ENCODE measurements at regions of chr1 and their contacts with region 1.

Region 1: DNA sequence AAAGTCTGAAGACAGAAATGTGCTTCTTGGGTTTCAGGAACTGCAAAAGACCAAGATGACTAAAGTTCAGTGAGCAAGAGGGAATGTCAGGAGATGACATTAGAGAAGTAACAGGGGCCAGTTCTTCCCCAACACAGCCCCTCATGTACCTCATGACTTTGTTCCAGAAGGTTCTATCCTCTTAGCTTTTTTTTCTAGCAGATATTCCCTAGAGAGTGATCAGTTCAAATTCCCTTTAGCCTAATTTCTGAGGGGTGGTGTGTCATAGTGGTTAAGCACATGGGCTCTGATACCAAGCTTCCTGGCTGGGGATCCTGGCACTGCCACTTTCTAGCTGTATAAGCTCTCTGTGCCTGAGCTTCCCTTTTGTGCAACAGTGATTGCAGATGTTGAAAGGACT is 108.0 kb downstream of the LBR start:
- DNase-seq: no peak
- ATAC-seq: peak; percentile 32
- H3K4me3 ChIP-seq: no peak overlapping the region
- H3K27ac ChIP-seq: no peak overlapping the region
- H3K4me1 ChIP-seq: peaks cover 0 to 2% of the 10 kb centered on the region in 2 donors
- H3K27me3 ChIP-seq: no peaks in the 10 kb centered on the region
- CTCF ChIP-seq: no peak

Region 2: DNA sequence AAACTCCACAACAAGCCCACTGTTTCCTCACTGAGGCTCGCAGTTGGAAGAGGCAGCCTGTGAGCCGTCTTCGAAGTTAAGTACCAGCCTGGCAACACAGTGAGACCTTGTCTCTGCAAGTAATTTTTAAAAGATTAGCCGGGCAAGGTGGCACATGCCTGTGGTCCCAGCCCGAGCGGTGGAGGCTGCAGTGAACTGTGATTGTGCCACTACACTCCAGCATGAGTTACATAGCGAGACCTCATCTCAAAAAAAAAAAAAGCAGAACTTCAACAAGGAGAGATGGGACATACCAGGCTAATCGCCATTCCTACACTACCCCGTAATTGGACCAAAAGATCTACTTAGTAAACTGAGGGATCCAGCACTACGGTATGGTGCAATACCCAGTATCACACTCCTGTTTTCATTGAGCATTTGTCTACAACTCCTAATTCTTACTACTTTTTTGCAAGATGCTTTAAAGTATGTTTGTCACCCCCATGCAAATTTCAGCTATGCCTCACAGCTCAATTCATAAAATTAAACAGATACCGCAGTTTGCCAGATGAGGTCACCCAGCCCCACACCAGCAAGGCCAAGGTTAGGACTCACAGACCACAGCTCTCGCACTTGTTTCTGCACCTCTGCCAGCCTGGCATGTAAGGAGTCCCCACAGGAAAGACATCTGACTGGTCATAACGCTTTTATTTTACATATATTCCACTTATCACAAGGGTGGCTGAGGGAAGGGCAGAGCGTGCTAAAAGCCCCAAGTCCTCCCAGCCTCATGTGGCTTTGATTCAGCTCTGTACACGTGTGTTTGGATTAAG is 658.3 kb after region 1 on chr1:
- intact Hi-C with region 1: loop called in 1 of 2 experiments (anchors 10 kb)
- DNase-seq: peak in 1 of 4 donors; percentile 9
- ATAC-seq: no peak
- H3K4me3 ChIP-seq: no peak overlapping the region
- H3K27ac ChIP-seq: no peak overlapping the region
- H3K4me1 ChIP-seq: no peaks in the 10 kb centered on the region
- H3K27me3 ChIP-seq: no peaks in the 10 kb centered on the region
- CTCF ChIP-seq: no peak

Measured in left lung (tissue), 14 donors.